ENCODE measurements at regions of chr10 and their contacts with region 1.

Region 1: DNA sequence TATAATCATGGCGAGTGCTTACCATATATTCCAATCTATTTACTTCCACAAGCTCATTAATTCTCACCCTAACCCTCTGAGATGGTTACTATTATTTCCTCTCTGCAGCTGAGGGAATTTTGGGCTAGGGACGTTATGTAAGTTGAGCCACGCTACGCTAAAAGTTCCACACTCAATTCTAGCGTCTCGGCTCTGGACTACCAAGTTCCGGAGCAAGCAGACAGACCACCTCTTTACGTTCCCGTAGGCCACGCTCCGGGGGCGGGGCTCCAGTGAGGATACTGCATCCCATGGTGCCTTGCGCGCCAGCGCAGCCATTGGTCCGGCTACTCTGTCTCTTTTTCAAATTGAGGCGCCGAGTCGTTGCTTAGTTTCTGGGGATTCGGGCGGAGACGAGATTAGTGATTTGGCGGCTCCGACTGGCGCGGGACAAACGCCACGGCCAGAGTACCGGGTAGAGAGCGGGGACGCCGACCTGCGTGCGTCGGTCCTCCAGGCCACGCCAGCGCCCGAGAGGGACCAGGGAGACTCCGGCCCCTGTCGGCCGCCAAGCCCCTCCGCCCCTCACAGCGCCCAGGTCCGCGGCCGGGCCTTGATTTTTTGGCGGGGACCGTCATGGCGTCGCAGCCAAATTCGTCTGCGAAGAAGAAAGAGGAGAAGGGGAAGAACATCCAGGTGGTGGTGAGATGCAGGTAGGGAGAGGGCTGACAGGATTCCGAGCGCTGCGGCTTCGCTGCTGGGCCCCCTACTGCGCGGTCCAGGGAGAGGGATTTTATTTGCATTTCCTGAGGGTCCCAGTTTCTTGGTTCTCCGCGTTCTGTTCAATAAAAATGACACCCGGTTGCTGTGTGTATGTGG is at the start of gene KIF11:
- DNase-seq: peak; percentile 93 to 97 (median 95)
- H3K4me3 ChIP-seq: peak within 1 kb of the TSS; percentile 61
- H3K4me3 Mint-ChIP-seq: peak within 1 kb of the TSS; percentile 96 to 99 (median 97)
- H3K27ac ChIP-seq: peak within 1 kb of the TSS; percentile 87
- H3K27ac Mint-ChIP-seq: peak within 1 kb of the TSS; percentile 97 to 100 (median 99)
- H3K4me1 ChIP-seq: peaks cover 13% of the 10 kb centered on the region
- H3K4me1 Mint-ChIP-seq: peaks cover 39 to 62% (median 52%) of the 10 kb centered on the region in 3 donors
- H3K27me3 ChIP-seq: no peaks in the 10 kb centered on the region
- H3K27me3 Mint-ChIP-seq: no peaks in the 10 kb centered on the region
- total RNA-seq, gene KIF11: 36.2 to 37.1 TPM

Region 2: GRCh38 chr10:92573798-92574547 is 19.0 kb before region 1 on chr10 and contains the start of gene IDE:
- CTCF ChIA-PET with region 1: interaction called, 47 read pairs
- POLR2A ChIA-PET with region 1: interaction called, 46 read pairs
- DNase-seq: peak; percentile 69 to 87 (median 77)
- H3K4me3 ChIP-seq: peak within 1 kb of the TSS; percentile 96
- H3K4me3 Mint-ChIP-seq: peak within 1 kb of the TSS; percentile 69 to 95 (median 90)
- H3K27ac ChIP-seq: peak within 1 kb of the TSS; percentile 90
- H3K27ac Mint-ChIP-seq: peak within 1 kb of the TSS; percentile 80 to 96 (median 92)
- H3K4me1 ChIP-seq: peaks cover 9% of the 10 kb centered on the region
- H3K4me1 Mint-ChIP-seq: peaks cover 34 to 43% (median 42%) of the 10 kb centered on the region in 3 donors
- H3K27me3 ChIP-seq: no peaks in the 10 kb centered on the region
- H3K27me3 Mint-ChIP-seq: no peaks in the 10 kb centered on the region
- total RNA-seq, gene IDE: 42.4 to 42.8 TPM

Region 3: DNA sequence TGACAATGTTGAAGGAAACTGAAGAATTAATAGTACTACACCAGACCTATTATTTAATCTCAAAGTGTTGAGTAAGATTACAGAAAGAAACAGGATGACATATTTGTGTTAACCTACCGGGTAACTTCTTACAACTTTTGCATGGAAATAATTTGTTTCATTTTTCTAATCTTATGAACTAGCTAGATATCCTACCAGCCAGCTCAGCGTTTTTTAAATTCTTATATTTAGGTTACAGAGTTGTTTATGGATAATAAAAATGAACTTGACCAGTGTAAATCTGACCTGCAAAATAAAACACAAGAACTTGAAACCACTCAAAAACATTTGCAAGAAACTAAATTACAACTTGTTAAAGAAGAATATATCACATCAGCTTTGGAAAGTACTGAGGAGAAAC is 37.0 kb after region 1 on chr10:
- CTCF ChIA-PET with region 1: no interaction called
- POLR2A ChIA-PET with region 1: no interaction called
- DNase-seq: no peak
- H3K4me3 ChIP-seq: no peak overlapping the region
- H3K4me3 Mint-ChIP-seq: no peak overlapping the region
- H3K27ac ChIP-seq: no peak overlapping the region
- H3K27ac Mint-ChIP-seq: peak overlapping the region in 1 of 8 donors; percentile 12
- H3K4me1 ChIP-seq: no peaks in the 10 kb centered on the region
- H3K4me1 Mint-ChIP-seq: peaks cover 0 to 7% (median 0%) of the 10 kb centered on the region in 3 donors
- H3K27me3 ChIP-seq: no peaks in the 10 kb centered on the region
- H3K27me3 Mint-ChIP-seq: no peaks in the 10 kb centered on the region